ENCODE measurements at regions of chr5 and their contacts with region 1.

Region 1: DNA sequence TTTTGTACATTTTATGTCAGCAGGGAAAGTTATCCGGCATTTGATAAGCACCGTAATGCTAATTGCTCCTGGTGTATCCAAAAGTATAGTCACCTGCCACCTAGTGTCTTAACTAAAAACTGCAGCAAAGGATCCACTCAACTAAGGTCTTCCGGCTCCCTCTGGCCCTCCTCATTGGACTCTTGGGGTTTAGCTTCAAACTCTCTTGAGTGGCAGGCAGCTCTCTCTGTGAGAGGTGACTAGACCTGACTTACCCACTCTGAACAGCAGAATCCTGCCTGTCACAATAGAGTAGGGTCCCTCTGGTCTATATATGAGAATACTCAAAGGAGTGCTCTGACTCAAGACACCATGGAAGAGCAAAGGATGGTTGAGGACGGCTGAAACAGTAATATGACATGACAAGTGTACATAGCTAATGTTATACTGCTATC is 60.3 kb upstream of the CAST start:
- DNase-seq: peak; percentile 85
- H3K4me3 ChIP-seq: no peak overlapping the region
- H3K27ac ChIP-seq: no peak overlapping the region
- H3K4me1 ChIP-seq: peaks cover 6% of the 10 kb centered on the region
- H3K27me3 ChIP-seq: no peaks in the 10 kb centered on the region
- CTCF ChIP-seq: peak; percentile 83

Region 2: GRCh38 chr5:95858661-95859326 is 743.0 kb before region 1 on chr5:
- CTCF ChIA-PET with region 1: no interaction called
- POLR2A ChIA-PET with region 1: no interaction called
- intact Hi-C with region 1: loop called (anchors 5 kb)
- DNase-seq: peak; percentile 92
- H3K4me3 ChIP-seq: peak overlapping the region; percentile 27
- H3K27ac ChIP-seq: no peak overlapping the region
- H3K4me1 ChIP-seq: peaks cover 17% of the 10 kb centered on the region
- H3K27me3 ChIP-seq: no peaks in the 10 kb centered on the region
- CTCF ChIP-seq: peak; percentile 99

Region 3: GRCh38 chr5:96626956-96627355 is 25.1 kb after region 1 on chr5:
- CTCF ChIA-PET with region 1: no interaction called
- POLR2A ChIA-PET with region 1: no interaction called
- intact Hi-C with region 1: no loop called
- DNase-seq: no peak
- H3K4me3 ChIP-seq: no peak overlapping the region
- H3K27ac ChIP-seq: no peak overlapping the region
- H3K4me1 ChIP-seq: peaks cover 34% of the 10 kb centered on the region
- H3K27me3 ChIP-seq: no peaks in the 10 kb centered on the region
- CTCF ChIP-seq: no peak